T-cell (primary cell): ENCODE measurements at regions of chr10 and their contacts with region 1.

Region 1: DNA sequence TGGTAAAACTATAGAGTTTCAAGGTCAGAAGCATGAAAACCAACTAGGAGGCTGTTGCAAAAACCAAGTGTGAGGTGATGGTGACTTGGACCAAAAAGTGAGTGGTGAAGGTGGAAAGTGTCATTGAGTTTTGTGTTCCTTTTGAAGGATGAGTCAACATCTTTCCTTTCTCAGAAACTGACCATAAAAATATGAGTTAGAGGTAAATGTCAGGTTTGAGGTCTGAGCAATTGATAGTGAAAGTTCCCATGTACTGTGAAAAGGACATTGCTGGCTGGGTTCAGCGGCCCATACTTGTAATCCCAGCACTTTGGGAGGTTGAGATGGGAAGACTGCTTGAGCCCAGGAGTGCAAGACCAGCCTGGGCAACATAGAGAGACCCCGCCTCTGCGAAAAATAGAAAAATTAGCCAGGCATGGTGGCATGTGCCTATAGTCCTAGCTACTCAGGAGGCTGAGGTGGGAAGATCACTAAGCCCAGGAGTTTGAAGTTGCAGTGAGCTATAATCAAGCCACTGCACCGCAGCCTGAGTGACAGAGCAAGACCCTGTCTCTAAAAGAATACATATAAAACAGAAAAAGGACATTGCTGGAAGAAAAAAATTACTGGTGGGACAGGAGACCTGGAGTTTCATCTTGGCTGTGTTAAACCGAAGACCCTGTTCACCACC is 89.3 kb upstream of the ARID5B start:
- DNase-seq: no peak
- ATAC-seq: no peak
- H3K4me3 ChIP-seq: no peak overlapping the region
- H3K4me3 Mint-ChIP-seq: no peak overlapping the region
- H3K27ac ChIP-seq: no peak overlapping the region
- H3K27ac Mint-ChIP-seq: no peak overlapping the region
- H3K4me1 ChIP-seq: no peaks in the 10 kb centered on the region
- H3K4me1 Mint-ChIP-seq: no peaks in the 10 kb centered on the region
- H3K27me3 ChIP-seq: no peaks in the 10 kb centered on the region
- H3K27me3 Mint-ChIP-seq: no peaks in the 10 kb centered on the region

Region 2: DNA sequence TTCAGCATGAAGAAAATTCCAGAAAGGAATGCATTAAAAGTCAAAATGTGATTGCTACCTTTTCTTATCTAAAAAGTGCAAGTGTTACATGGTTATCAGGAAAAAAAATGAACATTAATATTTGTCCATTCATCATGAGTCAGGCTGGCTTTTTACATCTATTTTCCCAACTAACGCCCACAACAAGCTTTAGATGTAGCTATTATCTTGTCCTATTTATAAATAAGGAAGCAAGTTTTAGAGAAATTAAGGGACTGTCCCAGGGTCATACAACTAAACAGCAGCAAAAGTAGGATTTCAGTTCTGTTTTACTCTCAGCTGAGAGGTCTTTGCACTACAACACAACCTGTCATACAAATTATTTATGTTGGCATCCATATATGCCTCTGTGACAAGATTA is 31.9 kb after region 1 on chr10:
- CTCF ChIA-PET with region 1: no interaction called
- POLR2A ChIA-PET with region 1: interaction called in 1 of 2 experiments, 10 read pairs
- DNase-seq: no peak
- ATAC-seq: no peak
- H3K4me3 ChIP-seq: no peak overlapping the region
- H3K4me3 Mint-ChIP-seq: no peak overlapping the region
- H3K27ac ChIP-seq: no peak overlapping the region
- H3K27ac Mint-ChIP-seq: no peak overlapping the region
- H3K4me1 ChIP-seq: no peaks in the 10 kb centered on the region
- H3K4me1 Mint-ChIP-seq: peaks cover 4 to 8% (median 7%) of the 10 kb centered on the region in 3 donors
- H3K27me3 ChIP-seq: no peaks in the 10 kb centered on the region
- H3K27me3 Mint-ChIP-seq: no peaks in the 10 kb centered on the region